ENCODE measurements at regions of chr16 and their contacts with region 1.

Region 1: DNA sequence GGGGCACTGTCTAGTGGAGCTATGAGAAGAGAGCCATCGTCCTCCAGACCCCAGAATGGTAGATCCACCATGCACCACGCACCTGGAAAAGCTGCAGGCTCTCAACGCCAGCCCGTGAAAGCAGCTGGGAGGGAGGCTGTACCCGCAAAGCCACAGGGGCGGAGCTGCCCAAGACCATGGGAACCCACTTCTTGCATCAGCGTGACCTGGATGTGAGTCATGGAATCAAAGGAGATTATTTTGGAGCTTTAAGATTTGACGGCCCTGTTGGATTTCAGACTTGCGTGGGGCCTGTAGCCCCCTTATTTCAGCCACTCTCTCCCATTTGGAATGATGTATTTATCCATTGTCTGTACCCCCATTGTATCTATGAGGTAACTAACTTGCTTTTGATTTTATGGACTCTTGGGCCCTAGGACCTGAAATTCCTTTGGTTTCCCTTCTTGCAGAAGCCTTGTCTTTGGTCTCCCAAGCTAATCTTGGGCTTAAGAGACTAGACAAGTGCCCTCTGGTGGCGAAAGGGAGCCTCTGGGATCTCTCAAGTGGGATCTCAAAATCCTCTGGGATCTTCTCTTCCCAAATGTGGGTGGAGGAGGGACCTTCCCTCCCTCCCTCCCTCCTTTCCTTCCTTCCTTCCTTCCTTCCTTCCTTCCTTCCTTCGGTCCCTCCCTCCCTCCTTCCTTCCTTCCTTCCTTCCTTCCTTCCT is 58.2 kb upstream of the HAPSTR1 start:
- DNase-seq: no peak
- ATAC-seq: no peak
- H3K4me3 Mint-ChIP-seq: no peak overlapping the region
- H3K27ac Mint-ChIP-seq: no peak overlapping the region
- H3K4me1 Mint-ChIP-seq: no peaks in the 10 kb centered on the region
- H3K27me3 Mint-ChIP-seq: peaks cover 4% of the 10 kb centered on the region
- CTCF ChIP-seq: no peak

Region 2: GRCh38 chr16:8905168-8905762 is 128.0 kb before region 1 on chr16:
- CTCF ChIA-PET with region 1: no interaction called
- POLR2A ChIA-PET with region 1: no interaction called
- intact Hi-C with region 1: loop called (anchors 1 kb)
- DNase-seq: no peak
- ATAC-seq: peak; percentile 68
- H3K4me3 Mint-ChIP-seq: no peak overlapping the region
- H3K27ac Mint-ChIP-seq: no peak overlapping the region
- H3K4me1 Mint-ChIP-seq: no peaks in the 10 kb centered on the region
- H3K27me3 Mint-ChIP-seq: no peaks in the 10 kb centered on the region
- CTCF ChIP-seq: no peak